Panc1 (cell line): ENCODE measurements at regions of chr7 and their contacts with region 1.

Region 1: GRCh38 chr7:28643589-28644340 is 231.4 kb downstream of the CREB5 start:
- DNase-seq: no peak
- ATAC-seq: no peak
- H3K4me3 ChIP-seq: no peak overlapping the region
- H3K27ac ChIP-seq: no peak overlapping the region
- H3K4me1 ChIP-seq: no peaks in the 10 kb centered on the region
- H3K27me3 ChIP-seq: peaks cover 5% of the 10 kb centered on the region; the same call in 1 of the 2 replicates
- CTCF ChIP-seq: no peak

Region 2: DNA sequence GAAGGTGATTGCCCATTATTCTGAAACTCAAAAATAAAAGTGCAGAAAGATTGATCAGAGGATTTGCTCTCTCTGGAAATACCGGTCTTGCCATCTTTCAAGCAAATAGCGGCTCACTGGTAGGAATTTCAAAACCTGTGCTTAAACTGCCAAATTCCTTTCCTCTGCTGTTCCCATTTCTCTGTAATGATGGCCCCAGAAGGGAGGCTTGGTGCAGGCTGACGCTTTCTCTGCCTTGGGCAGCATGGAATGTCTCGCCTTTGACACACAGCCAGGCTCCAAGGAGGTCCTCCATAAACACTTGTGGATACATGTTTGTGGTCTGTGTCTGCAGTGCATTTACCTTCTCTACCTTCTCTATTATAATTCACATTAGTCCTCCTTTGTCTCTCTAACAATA is 1127.8 kb before region 1 on chr7:
- CTCF ChIA-PET with region 1: no interaction called
- POLR2A ChIA-PET with region 1: no interaction called
- in situ Hi-C with region 1: no loop called
- intact Hi-C with region 1: no loop called
- DNase-seq: no peak
- ATAC-seq: no peak
- H3K4me3 ChIP-seq: no peak overlapping the region
- H3K27ac ChIP-seq: no peak overlapping the region
- H3K4me1 ChIP-seq: no peaks in the 10 kb centered on the region
- H3K27me3 ChIP-seq: no peaks in the 10 kb centered on the region
- CTCF ChIP-seq: no peak

Region 3: GRCh38 chr7:28685644-28686417 is 42.1 kb after region 1 on chr7:
- CTCF ChIA-PET with region 1: interaction called, 11 read pairs
- POLR2A ChIA-PET with region 1: no interaction called
- in situ Hi-C with region 1: no loop called
- intact Hi-C with region 1: no loop called
- DNase-seq: peak; percentile 92
- ATAC-seq: peak; percentile 98
- H3K4me3 ChIP-seq: peak overlapping the region; percentile 47 to 74
- H3K27ac ChIP-seq: peak overlapping the region; percentile 84
- H3K4me1 ChIP-seq: peaks cover 17% of the 10 kb centered on the region
- H3K27me3 ChIP-seq: no peaks in the 10 kb centered on the region
- CTCF ChIP-seq: no peak

Region 4: GRCh38 chr7:28790467-28790866 is 146.7 kb after region 1 on chr7:
- CTCF ChIA-PET with region 1: no interaction called
- POLR2A ChIA-PET with region 1: interaction called, 12 read pairs
- in situ Hi-C with region 1: no loop called
- intact Hi-C with region 1: no loop called
- DNase-seq: no peak
- ATAC-seq: no peak
- H3K4me3 ChIP-seq: no peak overlapping the region
- H3K27ac ChIP-seq: no peak overlapping the region
- H3K4me1 ChIP-seq: no peaks in the 10 kb centered on the region
- H3K27me3 ChIP-seq: no peaks in the 10 kb centered on the region
- CTCF ChIP-seq: no peak